H1 (cell line): ENCODE measurements at regions of chr5 and their contacts with region 1.

Region 1: DNA sequence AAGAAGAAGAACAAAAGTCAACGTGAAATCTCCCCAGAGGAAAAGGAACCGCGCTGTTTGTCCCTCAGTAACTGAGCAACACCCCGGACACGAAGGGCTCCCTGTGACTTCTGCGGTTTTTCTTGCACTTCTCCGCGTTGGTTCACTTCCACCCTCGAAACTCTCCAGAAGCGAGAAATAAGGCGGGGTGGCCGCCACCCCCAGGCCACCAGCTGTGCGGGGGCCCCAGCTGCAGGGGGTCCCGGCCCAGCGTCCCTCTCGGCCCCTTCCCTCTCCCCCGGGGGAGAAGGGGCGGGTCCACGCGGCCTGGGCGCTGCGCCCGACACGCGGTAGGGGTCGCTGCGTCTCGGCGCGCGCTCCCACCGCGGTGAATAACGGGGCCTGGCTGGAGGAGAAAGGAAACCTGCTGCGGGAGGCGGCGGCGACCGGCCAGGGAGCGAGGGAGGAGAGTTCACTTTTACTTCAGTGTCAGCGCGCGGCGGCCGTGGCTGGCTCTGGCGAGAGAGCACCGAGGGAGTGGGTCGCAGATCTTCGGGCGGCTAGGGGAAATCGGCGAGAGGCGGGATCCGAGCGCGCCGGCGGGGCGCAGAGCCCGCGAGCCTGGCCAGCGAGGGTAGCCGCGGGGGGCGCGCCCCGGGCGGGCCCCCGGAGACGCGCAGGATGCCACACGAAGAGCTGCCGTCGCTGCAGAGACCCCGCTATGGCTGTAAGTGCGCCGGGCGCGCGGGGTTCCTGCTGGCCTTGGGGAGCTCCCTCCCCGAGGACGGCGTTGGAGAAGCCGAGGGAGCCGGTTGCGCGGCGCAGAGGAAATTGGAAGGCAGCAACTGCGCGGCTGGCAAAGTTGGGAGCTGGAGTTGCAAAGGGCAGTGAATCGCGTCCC is at the start of gene IQGAP2:
- DNase-seq: peak in 1 of 2 experiments; percentile 88
- H3K4me3 ChIP-seq: peak within 1 kb of the TSS; percentile 49 to 83 (median 67)
- H3K27ac ChIP-seq: no peak within 1 kb of the TSS
- H3K4me1 ChIP-seq: peaks cover 4 to 12% (median 7%) of the 10 kb centered on the region in 4 experiments; a peak in 5 of 7 replicates
- H3K27me3 ChIP-seq: no peaks in the 10 kb centered on the region; a peak in 1 of 7 replicates
- CTCF ChIP-seq: peak; percentile 71 to 81 (median 72)
- EP300 ChIP-seq: peak in 1 of 2 experiments; percentile 74; a peak in 1 of 3 replicates
- POLR2A ChIP-seq: peak in 1 of 2 experiments; percentile 48; a peak in 1 of 3 replicates
- RAD21 ChIP-seq: peak; percentile 68 to 71
- total RNA-seq, gene IQGAP2: 57.7 and 66.0 TPM in 2 replicates

Region 2: DNA sequence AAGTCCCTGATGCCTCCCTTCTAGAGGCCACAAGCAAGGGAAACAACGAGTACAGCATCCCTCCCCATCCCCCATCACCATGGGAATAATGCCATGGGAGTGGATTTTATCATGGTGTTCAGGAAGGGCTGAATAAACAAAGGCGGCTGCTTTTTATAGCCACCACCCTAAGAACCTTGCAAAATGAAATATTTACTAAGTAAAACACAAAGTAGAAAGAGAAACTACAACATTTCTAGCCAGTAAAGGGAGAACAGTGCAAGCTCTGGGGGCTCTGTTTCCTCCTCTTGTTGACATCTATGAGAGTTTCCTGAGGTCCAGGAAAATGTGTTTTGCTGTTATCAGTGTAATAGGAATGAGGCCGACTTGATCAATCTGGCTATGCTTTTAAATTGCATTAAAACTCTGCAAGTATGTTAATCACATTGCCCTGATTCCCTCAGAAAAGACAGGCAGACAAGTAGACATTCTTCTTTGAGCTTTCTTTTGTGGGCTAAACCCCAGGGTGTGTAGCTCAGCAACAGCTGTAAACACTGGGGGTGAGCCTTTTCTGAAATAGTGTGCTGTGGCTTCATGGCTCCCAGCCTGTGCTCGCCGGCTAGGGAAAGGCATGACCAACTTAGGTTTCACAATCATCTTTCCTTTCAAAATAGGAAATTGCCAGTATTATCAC is 288.8 kb before region 1 on chr5:
- CTCF ChIA-PET with region 1: no interaction called
- POLR2A ChIA-PET with region 1: no interaction called
- DNase-seq: no peak
- H3K4me3 ChIP-seq: no peak overlapping the region
- H3K27ac ChIP-seq: no peak overlapping the region
- H3K4me1 ChIP-seq: peaks cover 0 to 8% (median 6%) of the 10 kb centered on the region in 4 experiments; a peak in 3 of 7 replicates
- H3K27me3 ChIP-seq: peaks cover 0 to 1% (median 0%) of the 10 kb centered on the region in 4 experiments; a peak in 2 of 7 replicates
- CTCF ChIP-seq: no peak
- EP300 ChIP-seq: no peak
- POLR2A ChIP-seq: no peak
- RAD21 ChIP-seq: no peak

Region 3: DNA sequence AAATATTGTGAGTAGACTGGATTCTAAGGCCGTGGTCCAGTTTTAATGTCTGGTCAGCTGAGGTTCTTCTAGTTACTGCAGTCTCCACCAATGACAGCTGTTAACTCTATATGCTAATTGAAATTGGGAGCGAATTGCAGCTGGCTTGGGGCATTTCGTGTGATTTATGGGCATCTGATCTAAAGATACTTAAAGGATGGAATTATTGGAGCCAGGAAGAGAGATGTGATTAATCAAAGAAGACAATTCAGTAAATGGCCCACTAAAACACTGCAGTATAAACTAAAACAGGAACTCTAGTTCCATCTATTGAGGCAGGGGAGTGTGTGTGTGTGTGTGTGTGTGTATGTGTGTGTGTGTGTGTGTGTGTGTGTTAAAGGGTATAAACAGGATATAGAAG is 157.5 kb before region 1 on chr5:
- CTCF ChIA-PET with region 1: no interaction called
- POLR2A ChIA-PET with region 1: no interaction called
- DNase-seq: no peak
- H3K4me3 ChIP-seq: no peak overlapping the region
- H3K27ac ChIP-seq: no peak overlapping the region
- H3K4me1 ChIP-seq: no peaks in the 10 kb centered on the region
- H3K27me3 ChIP-seq: no peaks in the 10 kb centered on the region
- CTCF ChIP-seq: no peak
- EP300 ChIP-seq: no peak
- POLR2A ChIP-seq: no peak
- RAD21 ChIP-seq: no peak

Region 4: DNA sequence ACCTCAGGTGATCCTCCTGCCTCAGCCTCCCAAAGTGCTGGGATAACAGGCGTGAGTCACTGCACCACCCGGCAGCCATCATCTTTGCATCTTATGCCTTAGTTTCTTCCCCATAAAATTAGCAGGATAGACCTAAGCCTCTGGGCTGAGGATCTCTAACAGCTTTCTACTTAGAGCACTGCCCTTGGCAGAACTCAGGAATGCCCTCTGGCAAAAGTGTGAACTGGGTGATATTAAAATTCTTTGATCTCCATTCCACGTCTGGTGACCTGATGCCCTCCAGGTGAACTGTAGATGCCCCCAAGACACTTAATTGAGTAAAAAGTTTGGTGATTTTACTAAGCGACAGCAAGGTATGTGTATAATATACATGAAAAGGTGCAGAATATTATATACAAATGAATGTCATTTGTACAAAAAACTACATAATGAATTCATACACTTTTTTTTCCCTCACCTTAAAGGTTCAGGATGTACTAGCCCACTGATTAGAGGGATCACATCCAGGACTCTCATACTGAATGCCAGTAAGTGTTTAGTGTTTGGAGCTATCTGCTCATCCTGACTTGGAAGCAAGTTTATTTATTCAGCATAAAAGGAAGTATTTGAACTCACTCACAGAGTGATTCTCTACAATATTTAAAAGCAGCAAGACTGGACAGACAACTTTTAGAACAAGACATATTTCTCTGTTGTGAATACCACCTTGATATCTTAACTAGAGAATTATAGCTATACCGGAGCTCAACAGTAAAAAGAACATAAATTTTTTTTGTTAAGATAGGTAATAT is 15.1 kb before region 1 on chr5:
- CTCF ChIA-PET with region 1: interaction called, 10 read pairs
- POLR2A ChIA-PET with region 1: interaction called, 4 read pairs
- DNase-seq: no peak
- H3K4me3 ChIP-seq: no peak overlapping the region
- H3K27ac ChIP-seq: no peak overlapping the region
- H3K4me1 ChIP-seq: peaks cover 0 to 4% (median 4%) of the 10 kb centered on the region in 4 experiments; a peak in 4 of 7 replicates
- H3K27me3 ChIP-seq: no peaks in the 10 kb centered on the region
- CTCF ChIP-seq: no peak
- EP300 ChIP-seq: no peak
- POLR2A ChIP-seq: no peak
- RAD21 ChIP-seq: no peak

Region 5: DNA sequence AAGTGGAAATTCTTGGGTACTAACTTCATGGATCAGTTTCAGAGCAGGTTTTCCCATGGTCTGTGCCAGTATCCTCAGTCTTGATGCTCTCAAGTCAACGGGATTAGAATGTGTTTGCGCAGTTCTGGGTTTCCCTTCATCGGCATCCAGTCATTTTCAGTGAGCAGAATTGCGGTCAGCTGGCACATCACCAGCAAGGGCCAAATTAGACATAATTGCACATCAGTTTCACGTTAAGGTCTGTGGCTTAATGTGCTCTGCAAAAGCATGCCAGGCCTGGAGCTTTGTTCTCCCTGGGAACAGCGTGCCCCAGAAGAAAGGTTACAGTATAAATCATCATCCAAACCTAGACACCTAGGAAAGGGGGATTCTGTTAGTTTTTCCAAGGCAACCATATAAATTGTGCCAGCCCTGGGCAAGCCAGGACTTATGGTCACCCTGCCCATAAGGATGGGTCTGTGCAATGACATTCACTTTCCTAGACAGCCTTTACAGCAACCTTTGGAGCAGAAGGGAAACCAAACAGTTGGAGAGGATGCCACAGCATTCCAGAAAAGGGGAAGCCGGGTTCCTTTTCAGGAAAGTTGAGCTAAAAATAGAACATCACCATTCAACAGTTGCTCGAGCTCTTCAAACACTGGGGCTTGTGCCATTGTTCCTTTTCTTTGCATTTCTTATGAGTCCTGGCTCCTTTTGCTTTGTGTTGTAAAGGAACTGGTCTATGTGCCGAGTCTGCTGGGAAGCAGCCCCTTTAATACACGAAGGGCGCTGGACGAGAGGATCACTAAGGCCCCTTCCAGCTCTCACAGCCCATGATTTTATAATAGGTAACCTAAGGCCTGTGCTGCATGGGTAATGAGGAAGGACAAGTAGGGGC is 23.0 kb after region 1 on chr5:
- CTCF ChIA-PET with region 1: interaction called, 33 read pairs
- POLR2A ChIA-PET with region 1: interaction called, 10 read pairs
- DNase-seq: peak in 1 of 2 experiments; percentile 55
- H3K4me3 ChIP-seq: peak overlapping the region in 2 of 4 experiments; percentile 5 to 45; a peak in 3 of 8 replicates
- H3K27ac ChIP-seq: peak overlapping the region; percentile 67
- H3K4me1 ChIP-seq: peaks cover 20 to 32% (median 30%) of the 10 kb centered on the region in 4 experiments
- H3K27me3 ChIP-seq: no peaks in the 10 kb centered on the region
- CTCF ChIP-seq: no peak
- EP300 ChIP-seq: no peak
- POLR2A ChIP-seq: no peak; a peak in 1 of 3 replicates
- RAD21 ChIP-seq: no peak

Region 6: GRCh38 chr5:76544268-76544926 is 141.3 kb after region 1 on chr5:
- CTCF ChIA-PET with region 1: interaction called, 31 read pairs
- POLR2A ChIA-PET with region 1: interaction called, 9 read pairs
- DNase-seq: no peak
- H3K4me3 ChIP-seq: no peak overlapping the region
- H3K27ac ChIP-seq: no peak overlapping the region
- H3K4me1 ChIP-seq: peaks cover 0 to 12% (median 1%) of the 10 kb centered on the region in 4 experiments; a peak in 3 of 7 replicates
- H3K27me3 ChIP-seq: no peaks in the 10 kb centered on the region
- CTCF ChIP-seq: peak; percentile 82 to 84 (median 84)
- EP300 ChIP-seq: no peak
- POLR2A ChIP-seq: no peak
- RAD21 ChIP-seq: peak; percentile 95 to 96

Region 7: DNA sequence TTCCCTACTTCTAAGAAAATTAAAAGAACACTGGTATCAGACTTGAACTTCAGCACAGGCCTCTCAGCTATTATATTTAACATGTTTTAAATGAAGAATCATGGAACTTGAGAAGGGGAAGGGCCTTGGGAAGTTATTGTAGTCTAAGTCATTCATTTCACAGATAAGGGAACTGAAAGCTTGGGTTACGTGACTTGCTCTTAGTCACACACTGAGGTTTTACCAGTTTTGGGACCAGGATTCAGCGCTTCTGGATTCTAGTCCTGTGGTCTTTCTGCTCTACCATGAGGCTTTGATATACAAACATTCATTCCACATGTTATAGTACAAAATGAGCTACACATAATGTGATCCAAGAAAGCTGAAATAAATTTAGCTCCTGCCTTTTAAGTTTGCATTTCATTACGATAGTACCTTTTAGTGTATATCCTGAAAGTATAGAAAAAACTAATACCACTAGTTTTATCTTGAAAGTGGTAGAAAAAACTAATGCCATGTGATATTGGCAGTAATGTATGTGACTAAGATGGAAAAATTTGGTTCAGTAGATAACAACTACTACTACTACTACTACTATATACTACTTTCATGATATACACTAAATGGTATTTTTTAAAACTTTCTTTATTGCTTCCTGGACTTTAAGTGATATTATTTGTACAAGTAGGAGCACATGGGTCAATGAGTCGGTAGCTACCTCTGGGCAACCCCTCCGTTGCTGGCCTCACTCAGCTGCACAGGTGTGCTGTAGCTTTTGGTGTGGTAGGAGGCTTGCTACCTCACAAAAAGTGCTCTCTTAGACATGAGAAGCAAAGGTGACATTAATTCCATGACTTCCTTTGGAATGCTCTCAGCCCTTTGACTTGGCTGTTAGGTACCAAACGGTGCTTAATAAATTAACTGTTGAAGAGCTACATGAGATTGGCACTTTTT is 179.4 kb after region 1 on chr5:
- CTCF ChIA-PET with region 1: interaction called, 11 read pairs
- POLR2A ChIA-PET with region 1: interaction called, 7 read pairs
- DNase-seq: no peak
- H3K4me3 ChIP-seq: no peak overlapping the region
- H3K27ac ChIP-seq: no peak overlapping the region
- H3K4me1 ChIP-seq: peaks cover 0 to 5% (median 3%) of the 10 kb centered on the region in 4 experiments; a peak in 4 of 7 replicates
- H3K27me3 ChIP-seq: no peaks in the 10 kb centered on the region
- CTCF ChIP-seq: no peak
- EP300 ChIP-seq: no peak
- POLR2A ChIP-seq: no peak
- RAD21 ChIP-seq: no peak